ENCODE measurements at regions of chr1 and their contacts with region 1.

Region 1: GRCh38 chr1:200659269-200659668 is 10.4 kb downstream of the DDX59 start:
- DNase-seq: no peak
- ATAC-seq: no peak
- H3K4me3 Mint-ChIP-seq: no peak overlapping the region
- H3K27ac Mint-ChIP-seq: peak overlapping the region; percentile 15
- H3K4me1 Mint-ChIP-seq: peaks cover 41% of the 10 kb centered on the region
- H3K27me3 Mint-ChIP-seq: no peaks in the 10 kb centered on the region
- CTCF ChIP-seq: no peak

Region 2: DNA sequence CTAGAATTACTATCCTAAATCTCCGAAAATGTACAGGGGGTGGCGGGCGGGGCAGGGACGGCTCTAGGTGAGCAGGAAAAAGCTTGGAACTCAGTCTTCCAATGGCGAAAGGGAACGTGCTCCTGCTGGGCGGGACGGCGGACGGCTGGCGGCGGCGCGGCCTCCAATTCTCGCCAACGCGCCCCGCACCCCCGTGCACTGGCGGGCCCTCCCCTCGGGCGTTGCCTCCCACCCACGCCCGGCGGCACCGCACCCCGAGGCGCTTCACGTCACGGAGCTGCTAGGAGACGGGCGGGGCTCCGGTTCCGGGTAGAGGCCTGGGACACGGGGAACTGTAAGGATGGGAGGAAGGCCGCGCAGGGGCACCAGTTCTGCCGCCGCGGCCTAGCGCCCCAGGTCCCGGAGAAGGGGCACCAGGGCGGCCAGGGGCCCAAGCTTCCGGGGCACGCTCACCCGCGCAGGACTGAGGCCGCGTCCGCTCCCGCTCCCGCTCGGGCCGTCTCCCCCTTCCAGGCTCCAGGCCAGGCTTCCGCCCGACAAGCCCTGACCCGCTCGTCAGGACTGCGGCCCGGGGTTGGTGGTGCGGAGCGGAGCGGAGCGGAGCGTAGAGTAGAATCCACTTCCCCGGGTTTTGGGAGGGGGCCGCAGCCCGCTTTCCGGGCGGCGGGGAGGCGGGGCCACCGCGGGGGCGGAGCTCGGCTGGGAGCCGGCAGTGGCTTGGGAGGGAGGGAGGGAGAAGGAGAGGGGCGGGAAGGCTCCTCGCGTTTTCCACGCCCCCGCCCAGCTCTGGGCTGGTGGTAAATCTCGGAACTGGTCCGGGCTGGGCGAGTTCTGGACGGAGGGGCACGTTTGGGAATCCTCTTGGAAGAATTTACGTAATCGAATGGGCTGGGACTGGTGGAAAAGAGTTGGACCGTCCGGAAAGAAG is 10.3 kb after region 1 on chr1 and contains the start of gene DDX59:
- CTCF ChIA-PET with region 1: interaction called, 5 read pairs
- POLR2A ChIA-PET with region 1: interaction called, 14 read pairs
- intact Hi-C with region 1: no loop called
- DNase-seq: peak; percentile 95
- ATAC-seq: peak; percentile 85
- H3K4me3 Mint-ChIP-seq: peak within 1 kb of the TSS; percentile 94
- H3K27ac Mint-ChIP-seq: peak within 1 kb of the TSS; percentile 94
- H3K4me1 Mint-ChIP-seq: peaks cover 39% of the 10 kb centered on the region
- H3K27me3 Mint-ChIP-seq: no peaks in the 10 kb centered on the region
- CTCF ChIP-seq: no peak
- total RNA-seq, gene DDX59: 22.5 to 23.8 TPM

Region 3: DNA sequence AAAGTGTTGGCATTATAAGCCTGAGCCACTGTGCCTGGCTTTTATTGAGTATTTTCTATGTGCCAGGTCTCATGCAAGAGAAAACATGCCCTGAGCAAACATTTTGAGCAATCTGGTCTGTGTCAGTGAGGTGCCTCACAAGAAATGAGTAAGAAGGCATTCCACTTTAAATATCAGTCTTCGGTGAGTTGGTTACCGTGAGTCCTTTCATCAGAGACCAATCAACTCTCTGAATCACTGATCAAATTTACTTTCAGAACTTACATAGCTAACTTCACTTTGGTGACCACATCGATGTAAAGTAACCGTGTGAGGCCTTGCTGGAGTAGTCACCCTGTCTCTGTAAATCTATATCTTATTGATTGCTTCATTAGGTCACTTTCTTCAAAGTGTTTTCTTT is 24.7 kb after region 1 on chr1:
- CTCF ChIA-PET with region 1: no interaction called
- POLR2A ChIA-PET with region 1: no interaction called
- intact Hi-C with region 1: no loop called
- DNase-seq: no peak
- ATAC-seq: no peak
- H3K4me3 Mint-ChIP-seq: no peak overlapping the region
- H3K27ac Mint-ChIP-seq: no peak overlapping the region
- H3K4me1 Mint-ChIP-seq: no peaks in the 10 kb centered on the region
- H3K27me3 Mint-ChIP-seq: peaks cover 2% of the 10 kb centered on the region
- CTCF ChIP-seq: no peak